ENCODE measurements at regions of chr19 and their contacts with region 1.

Region 1: DNA sequence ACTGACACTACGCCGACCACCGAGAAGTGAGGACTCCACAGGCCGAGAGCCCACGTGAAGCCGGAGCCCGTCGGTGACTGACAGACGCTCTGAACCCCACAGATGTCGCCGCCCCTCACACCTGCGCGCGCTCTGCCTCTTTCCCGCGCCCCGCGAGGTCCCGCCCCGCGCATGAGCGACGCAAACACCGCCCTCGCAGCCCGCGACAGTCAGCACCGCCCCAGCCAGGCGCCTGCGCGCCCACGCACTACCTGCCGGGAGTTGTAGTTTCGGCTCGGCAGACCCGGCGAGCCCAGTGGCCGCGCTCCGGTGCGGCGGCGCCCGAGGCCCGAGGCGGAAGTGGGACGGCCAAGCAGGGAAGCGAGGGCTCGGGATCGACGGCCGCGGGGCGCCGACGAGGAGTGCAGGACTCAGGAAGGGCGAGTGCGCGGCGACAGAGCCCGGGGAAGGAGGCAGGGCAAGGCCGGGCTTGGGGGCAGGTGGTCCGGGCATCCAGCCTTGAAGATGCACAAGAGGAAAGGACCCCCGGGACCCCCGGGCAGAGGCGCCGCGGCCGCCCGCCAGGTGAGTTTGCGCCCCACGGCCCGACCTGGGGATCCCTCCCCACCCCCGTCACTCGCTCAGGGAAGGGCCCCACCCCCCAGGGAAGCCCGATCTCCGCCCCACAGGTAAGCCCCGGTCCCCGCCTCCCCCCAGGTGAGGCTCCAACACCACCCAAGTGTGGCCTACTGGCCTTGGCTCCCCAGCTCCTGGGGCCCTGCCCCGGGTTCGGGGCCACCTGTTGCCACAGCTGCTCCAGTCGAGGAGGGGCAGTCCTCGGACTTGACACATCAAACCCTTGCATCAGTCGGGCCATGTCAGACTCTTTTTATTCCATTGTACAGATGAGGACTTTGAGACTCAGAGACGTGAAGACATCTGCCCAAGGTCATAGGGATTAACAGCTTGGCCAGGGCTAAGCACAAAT is at the starts of genes BRME1 and CC2D1A:
- DNase-seq: peak; percentile 87 to 94 (median 92)
- ATAC-seq: peak; percentile 100
- H3K4me3 ChIP-seq: peak within 1 kb of the TSS; percentile 84
- H3K4me3 Mint-ChIP-seq: peak within 1 kb of the TSS; percentile 84 to 94 (median 88)
- H3K27ac ChIP-seq: peak within 1 kb of the TSS; percentile 77
- H3K27ac Mint-ChIP-seq: peak within 1 kb of the TSS; percentile 83 to 94 (median 91)
- H3K4me1 ChIP-seq: peaks cover 12% of the 10 kb centered on the region in 2 donors
- H3K4me1 Mint-ChIP-seq: peaks cover 12 to 29% (median 16%) of the 10 kb centered on the region in 7 donors
- H3K27me3 ChIP-seq: no peaks in the 10 kb centered on the region
- H3K27me3 Mint-ChIP-seq: no peaks in the 10 kb centered on the region
- total RNA-seq, gene BRME1: 1.8 to 13.7 (median 2.9) TPM
- total RNA-seq, gene CC2D1A: 21.0 to 33.1 (median 29.8) TPM

Region 2: GRCh38 chr19:13833330-13834243 is 72.6 kb before region 1 on chr19:
- CTCF ChIA-PET with region 1: no interaction called
- POLR2A ChIA-PET with region 1: no interaction called
- intact Hi-C with region 1: loop called in 1 of 2 experiments (anchors 1 kb)
- DNase-seq: peak; percentile 88 to 97 (median 92)
- ATAC-seq: peak; percentile 69
- H3K4me3 ChIP-seq: peak overlapping the region; percentile 70
- H3K4me3 Mint-ChIP-seq: peak overlapping the region; percentile 79 to 93 (median 88)
- H3K27ac ChIP-seq: peak overlapping the region; percentile 85
- H3K27ac Mint-ChIP-seq: peak overlapping the region; percentile 88 to 97 (median 91)
- H3K4me1 ChIP-seq: peaks cover 31 to 41% of the 10 kb centered on the region in 2 donors
- H3K4me1 Mint-ChIP-seq: peaks cover 15 to 41% (median 36%) of the 10 kb centered on the region in 7 donors
- H3K27me3 ChIP-seq: no peaks in the 10 kb centered on the region
- H3K27me3 Mint-ChIP-seq: no peaks in the 10 kb centered on the region

Measured in naive thymus-derived CD4-positive, alpha-beta T cell (primary cell).